ENCODE measurements at regions of chr19 and their contacts with region 1.

Region 1: GRCh38 chr19:40444192-40445028 is at the start of gene SERTAD3:
- DNase-seq: peak; percentile 97
- H3K4me3 Mint-ChIP-seq: peak within 1 kb of the TSS; percentile 97
- H3K27ac Mint-ChIP-seq: peak within 1 kb of the TSS; percentile 97
- H3K4me1 Mint-ChIP-seq: peaks cover 26% of the 10 kb centered on the region
- H3K27me3 Mint-ChIP-seq: no peaks in the 10 kb centered on the region
- total RNA-seq, gene SERTAD3: 6.4 and 10.0 TPM in 2 replicates

Region 2: GRCh38 chr19:40348125-40348913 is 96.1 kb before region 1 on chr19 and contains the starts of genes C19orf47 and PLD3:
- intact Hi-C with region 1: loop called (anchors 1 kb)
- DNase-seq: peak; percentile 99
- H3K4me3 Mint-ChIP-seq: peak within 1 kb of the TSS; percentile 97
- H3K27ac Mint-ChIP-seq: peak within 1 kb of the TSS; percentile 95
- H3K4me1 Mint-ChIP-seq: peaks cover 21% of the 10 kb centered on the region
- H3K27me3 Mint-ChIP-seq: peaks cover 2% of the 10 kb centered on the region
- total RNA-seq, gene C19orf47: 26.4 and 28.1 TPM in 2 replicates
- total RNA-seq, gene PLD3: 45.0 and 45.3 TPM in 2 replicates

Region 3: GRCh38 chr19:40425450-40426287 is 18.7 kb before region 1 on chr19 and contains the start of gene SERTAD1:
- intact Hi-C with region 1: loop called (anchors 1 kb)
- DNase-seq: peak; percentile 100
- H3K4me3 Mint-ChIP-seq: peak within 1 kb of the TSS; percentile 93
- H3K27ac Mint-ChIP-seq: peak within 1 kb of the TSS; percentile 99
- H3K4me1 Mint-ChIP-seq: peaks cover 7% of the 10 kb centered on the region
- H3K27me3 Mint-ChIP-seq: peaks cover 2% of the 10 kb centered on the region
- total RNA-seq, gene SERTAD1: 18.3 and 19.4 TPM in 2 replicates

Region 4: DNA sequence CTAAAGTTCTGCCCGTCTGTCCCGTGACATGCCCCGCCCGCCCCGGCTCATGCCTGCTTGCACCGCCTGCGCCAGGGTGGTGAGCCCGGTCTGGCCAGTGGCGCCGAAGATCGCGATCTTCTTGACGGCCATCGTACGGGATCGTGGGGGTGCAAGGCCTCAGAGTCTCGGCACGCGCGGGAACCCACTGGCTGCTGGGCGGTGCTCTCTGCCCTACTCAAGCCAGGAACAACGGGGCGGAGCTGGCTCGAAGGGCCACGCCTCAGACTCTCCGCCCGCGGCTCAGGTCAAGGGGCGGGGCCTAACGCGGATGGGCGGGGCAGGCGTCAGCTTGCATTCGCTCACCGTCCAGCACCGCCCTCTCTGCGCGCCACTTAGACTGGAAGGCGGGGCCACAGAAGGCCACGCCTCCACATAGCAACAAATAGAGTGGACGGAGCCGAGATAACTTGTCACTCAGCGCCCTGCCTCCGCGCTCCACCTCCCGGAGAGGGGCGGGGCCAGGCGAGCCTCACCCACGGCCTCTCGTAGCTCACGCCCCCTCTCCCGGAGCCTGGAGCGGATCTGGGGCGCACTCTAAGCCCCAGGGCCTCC is 21.2 kb after region 1 on chr19 and contains the start of gene BLVRB:
- intact Hi-C with region 1: loop called (anchors 1 kb)
- DNase-seq: peak; percentile 99
- H3K4me3 Mint-ChIP-seq: peak within 1 kb of the TSS; percentile 77
- H3K27ac Mint-ChIP-seq: peak within 1 kb of the TSS; percentile 92
- H3K4me1 Mint-ChIP-seq: peaks cover 28% of the 10 kb centered on the region
- H3K27me3 Mint-ChIP-seq: peaks cover 27% of the 10 kb centered on the region
- total RNA-seq, gene BLVRB: 6.1 and 8.2 TPM in 2 replicates

Region 5: GRCh38 chr19:40502647-40503319 is 58.4 kb after region 1 on chr19:
- intact Hi-C with region 1: no loop called
- DNase-seq: no peak
- H3K4me3 Mint-ChIP-seq: no peak overlapping the region
- H3K27ac Mint-ChIP-seq: no peak overlapping the region
- H3K4me1 Mint-ChIP-seq: no peaks in the 10 kb centered on the region
- H3K27me3 Mint-ChIP-seq: peaks cover 9% of the 10 kb centered on the region

Region 6: GRCh38 chr19:41363753-41364523 is 919.5 kb after region 1 on chr19 and contains the start of gene B9D2:
- intact Hi-C with region 1: loop called (anchors 5 kb)
- DNase-seq: peak; percentile 97
- H3K4me3 Mint-ChIP-seq: peak within 1 kb of the TSS; percentile 88
- H3K27ac Mint-ChIP-seq: peak within 1 kb of the TSS; percentile 98
- H3K4me1 Mint-ChIP-seq: peaks cover 30% of the 10 kb centered on the region
- H3K27me3 Mint-ChIP-seq: no peaks in the 10 kb centered on the region
- total RNA-seq, gene B9D2: 4.4 and 4.5 TPM in 2 replicates